Gastrocnemius medialis (tissue), 4 donors: ENCODE measurements at regions of chr3 and their contacts with region 1.

Region 1: GRCh38 chr3:4722103-4722502 is 229.0 kb downstream of the ITPR1 start:
- DNase-seq: peak in 1 of 2 donors; percentile 58
- ATAC-seq: peak; percentile 75 to 84
- H3K4me3 ChIP-seq: no peak overlapping the region
- H3K27ac ChIP-seq: peak overlapping the region; percentile 33 to 81 (median 54)
- H3K4me1 ChIP-seq: peaks cover 46 to 51% of the 10 kb centered on the region in 2 donors
- H3K27me3 ChIP-seq: no peaks in the 10 kb centered on the region
- CTCF ChIP-seq: peak in 3 of 5 experiments; percentile 29 to 49 (median 41)
- POLR2A ChIP-seq: no peak

Region 2: GRCh38 chr3:4780545-4780957 is 58.4 kb after region 1 on chr3:
- in situ Hi-C with region 1: no loop called
- intact Hi-C with region 1: loop called (anchors 2 kb)
- DNase-seq: no peak
- ATAC-seq: no peak
- H3K4me3 ChIP-seq: no peak overlapping the region
- H3K27ac ChIP-seq: no peak overlapping the region
- H3K4me1 ChIP-seq: peaks cover 13 to 17% of the 10 kb centered on the region in 2 donors
- H3K27me3 ChIP-seq: no peaks in the 10 kb centered on the region
- CTCF ChIP-seq: no peak
- POLR2A ChIP-seq: no peak

Region 3: DNA sequence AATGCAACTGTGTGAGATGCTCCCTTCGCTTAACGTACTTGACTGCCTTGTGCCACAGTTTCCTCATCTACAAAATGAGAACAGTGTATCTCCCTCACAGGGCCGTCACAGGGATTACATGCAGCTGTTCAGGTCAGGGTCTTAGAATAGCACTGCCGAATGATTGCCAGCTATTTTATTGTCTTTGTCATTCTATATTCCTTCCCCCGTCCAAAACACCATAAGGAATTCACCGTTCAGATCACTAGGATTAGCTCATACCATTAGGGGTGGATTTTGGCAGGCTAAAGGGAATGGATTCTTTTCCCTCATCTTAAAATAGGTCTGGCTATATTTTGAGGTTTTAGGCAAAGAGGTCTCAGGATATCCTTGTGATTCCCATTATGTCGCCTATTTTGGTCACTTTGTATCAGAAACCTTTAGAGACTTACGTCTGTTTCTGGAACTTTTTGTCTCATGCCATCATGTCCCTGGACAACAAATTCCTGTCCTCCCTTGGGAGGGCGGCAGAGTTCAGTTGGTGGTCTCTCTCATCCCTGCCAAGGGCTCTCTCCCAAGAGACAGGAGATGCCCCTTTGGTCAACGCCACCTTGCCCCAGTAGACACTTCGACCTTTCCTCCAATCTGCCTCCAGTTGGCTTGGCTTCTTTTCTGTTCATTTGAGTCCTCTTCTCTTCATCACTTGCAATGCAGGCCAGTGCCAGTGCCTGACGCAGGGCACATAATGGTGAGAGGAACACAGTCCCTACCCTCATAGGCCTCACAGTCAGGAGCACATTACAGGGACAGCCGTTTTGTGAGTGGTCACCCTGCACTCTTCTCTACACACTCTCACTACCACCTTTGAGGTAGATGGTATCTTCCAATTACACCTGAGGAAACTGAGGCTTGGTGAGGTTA is 85.5 kb after region 1 on chr3:
- in situ Hi-C with region 1: no loop called
- intact Hi-C with region 1: loop called (anchors 5 kb)
- DNase-seq: peak; percentile 45 to 81
- ATAC-seq: peak; percentile 82 to 90
- H3K4me3 ChIP-seq: no peak overlapping the region
- H3K27ac ChIP-seq: peak overlapping the region; percentile 76 to 89 (median 80)
- H3K4me1 ChIP-seq: peaks cover 16 to 31% of the 10 kb centered on the region in 2 donors
- H3K27me3 ChIP-seq: no peaks in the 10 kb centered on the region
- CTCF ChIP-seq: peak in 4 of 5 experiments; percentile 25 to 46 (median 33)
- POLR2A ChIP-seq: peak; percentile 9 to 46

Region 4: GRCh38 chr3:4826237-4827100 is 104.4 kb after region 1 on chr3:
- in situ Hi-C with region 1: loop called in 1 of 4 experiments (anchors 10 kb)
- intact Hi-C with region 1: loop called (anchors 1 kb)
- DNase-seq: peak; percentile 75 to 90
- ATAC-seq: peak; percentile 72 to 74
- H3K4me3 ChIP-seq: peak overlapping the region; percentile 12 to 36 (median 23)
- H3K27ac ChIP-seq: peak overlapping the region; percentile 80 to 89 (median 86)
- H3K4me1 ChIP-seq: peaks cover 48 to 67% of the 10 kb centered on the region in 2 donors
- H3K27me3 ChIP-seq: no peaks in the 10 kb centered on the region
- CTCF ChIP-seq: no peak
- POLR2A ChIP-seq: peak; percentile 67 to 83

Region 5: DNA sequence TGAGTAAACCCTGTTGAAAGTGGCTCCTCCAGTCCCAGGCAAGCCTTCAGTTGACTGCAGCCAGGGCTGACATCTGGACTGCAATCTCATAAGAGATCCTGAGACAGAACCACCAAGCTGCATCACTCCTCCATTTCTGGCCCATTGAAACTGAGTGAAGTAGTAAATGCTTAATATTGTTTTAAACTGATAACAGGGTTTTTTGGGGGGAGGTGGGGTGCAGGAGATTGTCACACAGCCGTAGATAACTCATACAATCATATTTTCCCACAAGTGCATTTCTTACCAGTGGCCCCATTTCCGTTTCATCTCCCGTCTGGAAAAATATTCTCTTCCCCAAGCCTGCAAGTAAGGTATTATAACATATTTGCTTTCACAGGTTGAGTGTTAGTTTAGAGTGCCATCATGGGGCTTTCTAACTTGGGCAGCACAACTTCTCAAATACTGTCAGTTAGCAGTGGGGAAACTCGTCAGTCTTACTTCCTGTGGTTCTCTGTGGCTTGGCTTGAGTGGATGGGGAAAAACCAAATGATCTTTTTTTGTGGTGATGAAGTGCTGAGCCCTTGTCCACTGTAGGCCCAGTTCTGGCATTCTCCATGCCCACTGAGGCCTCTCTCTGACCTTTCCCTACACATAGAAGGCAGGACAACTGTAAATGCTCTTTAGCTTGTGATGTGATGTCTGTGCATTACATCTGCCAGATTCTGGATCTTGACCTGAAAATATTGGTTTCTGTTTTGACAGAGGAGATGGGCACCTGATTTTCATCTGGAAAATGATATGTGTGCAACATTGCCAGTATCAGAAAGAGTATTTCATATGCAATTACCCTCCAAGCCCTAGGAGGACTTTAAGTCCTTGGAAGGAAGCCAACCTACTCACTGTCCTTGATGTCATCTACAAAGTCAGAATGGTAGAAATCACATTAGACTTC is 167.1 kb after region 1 on chr3:
- in situ Hi-C with region 1: loop called in 1 of 4 experiments (anchors 10 kb)
- intact Hi-C with region 1: no loop called
- DNase-seq: no peak
- ATAC-seq: no peak
- H3K4me3 ChIP-seq: no peak overlapping the region
- H3K27ac ChIP-seq: no peak overlapping the region
- H3K4me1 ChIP-seq: peaks cover 0 to 5% of the 10 kb centered on the region in 2 donors
- H3K27me3 ChIP-seq: no peaks in the 10 kb centered on the region
- CTCF ChIP-seq: no peak
- POLR2A ChIP-seq: no peak

Region 6: GRCh38 chr3:5026331-5027218 is 304.5 kb after region 1 on chr3:
- in situ Hi-C with region 1: loop called in 1 of 4 experiments (anchors 10 kb)
- intact Hi-C with region 1: loop called (anchors 1 kb)
- DNase-seq: peak; percentile 70 to 88
- ATAC-seq: peak; percentile 90
- H3K4me3 ChIP-seq: peak overlapping the region; percentile 59 to 84 (median 63)
- H3K27ac ChIP-seq: peak overlapping the region; percentile 74 to 89 (median 82)
- H3K4me1 ChIP-seq: peaks cover 9% of the 10 kb centered on the region in 2 donors
- H3K27me3 ChIP-seq: no peaks in the 10 kb centered on the region
- CTCF ChIP-seq: peak; percentile 57 to 84 (median 76)
- POLR2A ChIP-seq: peak; percentile 26 to 30

Region 7: GRCh38 chr3:5205165-5205941 is 483.2 kb after region 1 on chr3:
- in situ Hi-C with region 1: loop called in 1 of 4 experiments (anchors 25 kb)
- intact Hi-C with region 1: no loop called
- DNase-seq: no peak
- ATAC-seq: no peak
- H3K4me3 ChIP-seq: no peak overlapping the region
- H3K27ac ChIP-seq: no peak overlapping the region
- H3K4me1 ChIP-seq: no peaks in the 10 kb centered on the region
- H3K27me3 ChIP-seq: no peaks in the 10 kb centered on the region
- CTCF ChIP-seq: no peak
- POLR2A ChIP-seq: no peak